CD4-positive, alpha-beta memory T cell (primary cell): ENCODE measurements at regions of chr12 and their contacts with region 1.

Region 1: DNA sequence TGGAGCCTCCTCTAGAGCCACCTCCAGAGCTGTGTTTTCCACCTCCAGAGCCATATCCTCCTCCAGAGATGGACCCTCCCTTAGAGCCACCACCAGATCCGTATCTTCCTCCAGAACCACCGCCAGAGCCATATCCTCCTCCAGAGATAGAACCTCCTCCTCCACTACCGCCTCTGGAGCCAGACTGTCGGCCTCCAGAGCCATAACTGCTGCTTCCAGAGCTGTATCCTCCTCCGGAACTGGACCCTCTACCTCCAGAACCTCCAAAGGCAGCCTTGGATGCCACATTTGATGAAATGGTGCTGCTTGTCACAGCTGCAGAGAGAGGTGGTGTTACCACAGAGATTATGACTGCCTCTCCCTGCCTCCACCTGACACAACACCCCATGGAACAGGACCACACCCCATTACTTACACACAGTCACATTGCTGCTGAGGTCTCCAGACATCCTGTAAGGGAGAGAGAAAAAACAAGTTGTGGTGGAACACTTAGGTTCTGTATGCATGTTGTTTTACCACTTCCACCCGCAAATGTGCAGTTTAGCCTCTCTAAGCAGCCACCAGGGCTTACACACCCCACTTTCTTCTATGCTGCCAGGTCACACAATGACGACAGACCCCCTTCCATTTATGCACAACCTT is 6.8 kb downstream of the KRT2 start:
- DNase-seq: peak; percentile 74 to 90 (median 84)
- H3K4me3 ChIP-seq: no peak overlapping the region
- H3K4me3 Mint-ChIP-seq: peak overlapping the region in 7 of 8 donors; percentile 24 to 86 (median 77)
- H3K27ac ChIP-seq: peak overlapping the region; percentile 11
- H3K27ac Mint-ChIP-seq: peak overlapping the region; percentile 92 to 100 (median 99)
- H3K4me1 ChIP-seq: peaks cover 62% of the 10 kb centered on the region
- H3K4me1 Mint-ChIP-seq: peaks cover 30 to 85% (median 50%) of the 10 kb centered on the region in 4 donors
- H3K27me3 ChIP-seq: no peaks in the 10 kb centered on the region
- H3K27me3 Mint-ChIP-seq: peaks cover 0 to 4% of the 10 kb centered on the region in 2 donors

Region 2: DNA sequence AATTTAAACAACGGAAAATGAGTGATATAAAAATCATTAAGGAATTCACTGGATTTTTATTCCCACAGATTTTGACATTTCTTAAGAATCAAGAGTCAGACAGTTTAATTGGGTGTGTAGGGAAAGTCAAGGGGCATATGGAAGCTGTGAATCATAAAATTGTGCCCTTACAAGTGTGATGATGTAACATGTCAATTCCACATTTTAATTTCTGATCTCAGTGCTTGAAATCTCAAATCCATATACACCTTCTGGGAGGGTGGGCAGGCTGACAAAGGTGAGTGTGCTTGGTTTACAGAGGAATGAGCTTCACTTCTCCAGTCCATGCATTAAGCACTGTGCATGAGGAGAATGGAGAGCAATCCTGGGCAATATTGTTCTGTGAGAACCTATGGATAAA is 151.1 kb before region 1 on chr12:
- CTCF ChIA-PET with region 1: no interaction called
- POLR2A ChIA-PET with region 1: no interaction called
- intact Hi-C with region 1: no loop called
- DNase-seq: no peak
- H3K4me3 ChIP-seq: no peak overlapping the region
- H3K4me3 Mint-ChIP-seq: no peak overlapping the region
- H3K27ac ChIP-seq: no peak overlapping the region
- H3K27ac Mint-ChIP-seq: no peak overlapping the region
- H3K4me1 ChIP-seq: no peaks in the 10 kb centered on the region
- H3K4me1 Mint-ChIP-seq: no peaks in the 10 kb centered on the region
- H3K27me3 ChIP-seq: no peaks in the 10 kb centered on the region
- H3K27me3 Mint-ChIP-seq: peaks cover 21 to 39% of the 10 kb centered on the region in 2 donors

Region 3: DNA sequence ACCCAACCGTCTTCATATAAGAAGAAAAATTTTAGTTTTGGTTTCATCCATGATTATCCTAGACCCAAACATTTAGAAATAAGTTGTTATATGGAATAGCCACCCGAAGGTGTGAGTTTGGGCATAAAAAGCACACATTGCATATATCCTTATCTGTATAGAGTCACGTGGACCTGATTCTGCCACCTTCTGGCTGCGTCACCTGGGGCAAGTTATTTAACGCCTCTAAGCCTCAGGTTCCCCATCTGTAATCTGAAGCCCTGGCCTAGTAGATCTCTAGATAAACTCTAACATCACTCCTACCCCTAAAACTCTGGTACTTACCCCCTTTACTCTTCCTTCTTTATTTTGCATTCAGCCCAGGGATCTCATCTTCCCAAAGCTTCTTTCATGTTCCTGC is 110.8 kb before region 1 on chr12:
- CTCF ChIA-PET with region 1: no interaction called
- POLR2A ChIA-PET with region 1: no interaction called
- intact Hi-C with region 1: no loop called
- DNase-seq: no peak
- H3K4me3 ChIP-seq: no peak overlapping the region
- H3K4me3 Mint-ChIP-seq: no peak overlapping the region
- H3K27ac ChIP-seq: no peak overlapping the region
- H3K27ac Mint-ChIP-seq: no peak overlapping the region
- H3K4me1 ChIP-seq: no peaks in the 10 kb centered on the region
- H3K4me1 Mint-ChIP-seq: no peaks in the 10 kb centered on the region
- H3K27me3 ChIP-seq: no peaks in the 10 kb centered on the region
- H3K27me3 Mint-ChIP-seq: peaks cover 2 to 11% of the 10 kb centered on the region in 2 donors

Region 4: DNA sequence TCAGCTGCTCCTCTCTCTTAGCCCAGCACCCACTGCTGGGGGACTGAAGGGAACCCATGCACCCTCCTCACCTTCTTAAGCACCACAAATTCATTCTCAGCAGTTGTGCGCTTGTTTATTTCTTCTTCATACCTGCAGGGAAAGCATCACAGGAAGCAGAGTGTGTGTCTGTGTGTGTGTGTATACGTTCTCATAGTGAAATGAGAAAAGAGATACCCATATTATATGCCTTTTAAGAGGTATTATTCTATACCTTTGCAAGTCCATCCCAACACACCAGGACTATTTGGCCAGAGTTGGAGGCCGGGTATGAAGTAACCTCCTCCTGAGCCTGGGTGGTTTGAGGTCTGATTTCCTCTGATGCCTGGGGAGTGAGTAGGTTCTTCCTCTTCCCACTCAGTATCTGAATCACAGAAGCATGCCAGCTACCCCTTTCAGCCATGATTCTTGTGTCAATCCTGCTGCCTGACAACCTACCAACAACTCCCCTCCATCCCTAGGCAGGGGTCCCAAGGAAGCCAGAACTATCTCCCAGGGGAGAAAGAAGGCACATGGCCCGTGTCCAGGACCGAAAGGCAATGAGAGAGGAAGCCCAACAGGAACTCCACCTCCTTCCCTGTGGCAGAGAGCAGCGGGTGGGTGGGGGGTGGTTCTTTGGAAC is 29.9 kb before region 1 on chr12:
- CTCF ChIA-PET with region 1: interaction called, 9 read pairs
- POLR2A ChIA-PET with region 1: interaction called, 13 read pairs
- intact Hi-C with region 1: loop called (anchors 1 kb)
- DNase-seq: peak in 2 of 5 donors; percentile 12 to 26
- H3K4me3 ChIP-seq: no peak overlapping the region
- H3K4me3 Mint-ChIP-seq: peak overlapping the region in 7 of 8 donors; percentile 2 to 56 (median 21)
- H3K27ac ChIP-seq: no peak overlapping the region
- H3K27ac Mint-ChIP-seq: peak overlapping the region; percentile 49 to 96 (median 83)
- H3K4me1 ChIP-seq: peaks cover 53% of the 10 kb centered on the region
- H3K4me1 Mint-ChIP-seq: peaks cover 15 to 70% (median 44%) of the 10 kb centered on the region in 4 donors
- H3K27me3 ChIP-seq: no peaks in the 10 kb centered on the region
- H3K27me3 Mint-ChIP-seq: peaks cover 2 to 11% of the 10 kb centered on the region in 2 donors

Region 5: DNA sequence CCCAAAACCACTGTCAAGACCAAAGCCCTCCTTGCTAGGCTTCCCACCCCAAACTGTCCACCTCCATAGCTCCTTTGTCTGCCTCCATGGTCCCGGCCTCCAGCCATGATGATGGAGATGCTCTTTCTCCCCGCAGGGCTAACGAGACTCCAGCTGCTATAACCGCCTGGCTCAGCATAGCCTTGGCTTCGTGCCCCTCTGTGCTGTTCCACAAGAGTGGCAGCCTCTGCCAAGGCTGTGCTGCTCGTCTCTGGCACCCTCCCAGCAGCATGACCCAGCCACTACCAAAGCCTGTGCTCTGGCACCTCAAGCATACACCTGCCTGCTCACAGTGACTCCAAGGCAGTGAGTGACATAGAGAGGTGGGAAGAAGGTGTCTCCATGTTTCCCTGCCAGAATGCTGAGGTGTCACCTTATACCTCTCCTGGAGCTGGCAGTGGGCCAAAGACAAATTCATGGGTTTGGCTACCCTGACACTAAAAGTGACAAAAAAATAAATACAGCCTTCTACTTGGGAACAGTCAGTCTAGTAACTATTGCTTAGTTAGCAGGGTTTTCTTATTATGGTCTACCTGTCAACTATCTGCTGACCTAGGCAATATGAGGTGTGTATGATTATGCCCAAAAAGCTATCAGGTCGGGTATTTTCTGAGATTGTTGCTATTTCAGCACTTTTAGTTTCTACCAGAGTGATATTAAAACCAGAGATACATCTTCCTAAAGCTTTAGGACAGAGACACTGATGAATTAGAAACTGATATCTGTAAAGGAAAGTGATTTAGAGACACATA is 10.8 kb before region 1 on chr12:
- CTCF ChIA-PET with region 1: interaction called, 4 read pairs
- POLR2A ChIA-PET with region 1: interaction called, 20 read pairs
- intact Hi-C with region 1: no loop called
- DNase-seq: no peak
- H3K4me3 ChIP-seq: no peak overlapping the region
- H3K4me3 Mint-ChIP-seq: peak overlapping the region in 1 of 8 donors; percentile 54
- H3K27ac ChIP-seq: no peak overlapping the region
- H3K27ac Mint-ChIP-seq: peak overlapping the region in 5 of 7 donors; percentile 28 to 85 (median 54)
- H3K4me1 ChIP-seq: peaks cover 21% of the 10 kb centered on the region
- H3K4me1 Mint-ChIP-seq: peaks cover 12 to 52% (median 33%) of the 10 kb centered on the region in 4 donors
- H3K27me3 ChIP-seq: no peaks in the 10 kb centered on the region
- H3K27me3 Mint-ChIP-seq: peaks cover 3% of the 10 kb centered on the region in 2 donors

Region 6: DNA sequence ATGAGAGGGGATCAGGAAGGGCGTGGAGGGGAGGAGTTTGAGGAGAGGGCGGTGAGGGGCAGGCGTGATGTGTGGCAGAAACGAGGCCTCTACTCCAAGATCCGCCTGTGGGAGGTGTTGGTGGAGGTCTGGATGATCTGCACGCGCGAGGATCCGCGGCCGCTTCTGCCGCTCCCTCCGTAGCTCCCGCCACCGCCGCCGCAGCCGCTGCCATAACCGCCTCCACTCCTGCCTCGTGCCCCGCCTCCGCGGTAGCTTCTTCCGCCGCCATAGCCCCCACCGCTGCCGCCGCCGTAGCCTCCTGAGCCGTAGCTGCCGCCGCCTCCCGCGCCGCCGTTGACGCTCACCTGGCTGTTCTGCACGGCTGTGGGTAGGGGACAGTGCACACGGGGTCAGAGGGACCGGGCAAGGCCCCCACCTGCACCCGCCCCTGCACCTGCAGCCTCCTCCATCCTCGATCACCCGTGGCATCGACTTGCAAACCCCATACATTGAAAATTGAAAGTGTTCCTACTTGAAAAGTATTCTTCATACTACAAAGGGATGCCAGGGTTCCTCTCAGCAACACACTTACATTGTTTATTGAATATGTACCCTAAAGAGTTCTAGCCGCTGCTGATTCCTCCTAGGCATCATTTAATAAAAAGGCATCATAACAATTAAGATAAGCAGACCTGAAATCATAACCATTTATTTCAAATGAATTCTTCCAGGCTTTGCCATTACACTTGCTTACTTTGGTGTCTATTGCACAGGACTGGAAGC is 46.0 kb after region 1 on chr12:
- CTCF ChIA-PET with region 1: interaction called, 3 read pairs
- POLR2A ChIA-PET with region 1: interaction called, 3 read pairs
- intact Hi-C with region 1: loop called (anchors 5 kb)
- DNase-seq: peak; percentile 49 to 57 (median 55)
- H3K4me3 ChIP-seq: peak overlapping the region; percentile 46 to 49
- H3K4me3 Mint-ChIP-seq: peak overlapping the region; percentile 89 to 95 (median 94)
- H3K27ac ChIP-seq: no peak overlapping the region
- H3K27ac Mint-ChIP-seq: peak overlapping the region in 6 of 7 donors; percentile 58 to 89 (median 84)
- H3K4me1 ChIP-seq: peaks cover 15% of the 10 kb centered on the region
- H3K4me1 Mint-ChIP-seq: peaks cover 11 to 39% (median 23%) of the 10 kb centered on the region in 4 donors
- H3K27me3 ChIP-seq: no peaks in the 10 kb centered on the region
- H3K27me3 Mint-ChIP-seq: peaks cover 2 to 19% of the 10 kb centered on the region in 2 donors

Region 7: GRCh38 chr12:53123578-53124351 is 478.5 kb after region 1 on chr12:
- CTCF ChIA-PET with region 1: no interaction called
- POLR2A ChIA-PET with region 1: no interaction called
- intact Hi-C with region 1: no loop called
- DNase-seq: no peak
- H3K4me3 ChIP-seq: no peak overlapping the region
- H3K4me3 Mint-ChIP-seq: no peak overlapping the region
- H3K27ac ChIP-seq: no peak overlapping the region
- H3K27ac Mint-ChIP-seq: peak overlapping the region in 1 of 7 donors; percentile 62
- H3K4me1 ChIP-seq: no peaks in the 10 kb centered on the region
- H3K4me1 Mint-ChIP-seq: peaks cover 0 to 4% (median 0%) of the 10 kb centered on the region in 4 donors
- H3K27me3 ChIP-seq: no peaks in the 10 kb centered on the region
- H3K27me3 Mint-ChIP-seq: peaks cover 3 to 6% of the 10 kb centered on the region in 2 donors